ENCODE measurements at regions of chr12 and their contacts with region 1.

Region 1: DNA sequence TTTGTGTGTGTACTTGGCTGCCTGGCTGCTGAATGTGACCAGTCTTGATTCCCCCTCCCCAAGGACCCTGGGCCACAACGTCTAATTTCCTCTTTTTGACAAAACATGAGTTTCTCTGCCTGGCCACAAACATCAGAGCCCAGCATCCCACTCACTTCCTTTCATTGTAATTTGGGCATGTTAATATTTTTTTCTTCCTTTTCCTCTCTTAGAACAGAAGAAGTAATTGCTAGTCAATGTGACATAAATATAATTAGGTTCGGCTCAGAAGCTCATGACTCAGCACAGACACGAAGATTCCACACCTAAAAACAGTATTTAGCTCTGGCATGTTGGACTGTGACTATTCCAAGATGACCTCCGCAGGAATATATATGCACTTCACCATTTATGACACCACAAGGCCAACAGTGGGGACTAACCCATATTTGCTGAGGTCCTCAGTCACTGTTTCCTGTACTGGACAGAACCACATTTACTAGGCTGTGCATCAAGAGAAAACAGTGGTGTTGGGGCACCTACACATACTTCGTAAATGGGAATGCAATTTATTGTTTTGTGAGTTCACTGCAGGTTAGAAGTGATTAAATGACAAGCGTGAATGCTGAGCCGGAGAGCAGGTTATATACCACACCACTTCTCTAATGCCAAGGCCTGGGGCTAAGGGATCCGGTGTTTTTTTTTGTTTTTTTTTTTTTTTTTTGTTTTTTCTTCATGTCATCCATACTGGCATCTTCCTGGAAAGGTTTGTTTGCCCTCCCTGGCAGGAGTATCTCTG is 4.2 kb downstream of the GSG1 start:
- DNase-seq: no peak
- ATAC-seq: no peak
- H3K4me3 ChIP-seq: no peak overlapping the region
- H3K27ac ChIP-seq: no peak overlapping the region
- H3K4me1 ChIP-seq: peaks cover 19% of the 10 kb centered on the region; the same call in 1 of the 2 replicates
- H3K27me3 ChIP-seq: peaks cover 2 to 9% of the 10 kb centered on the region in 2 experiments; a peak in 3 of 4 replicates
- CTCF ChIP-seq: no peak
- EP300 ChIP-seq: no peak
- POLR2A ChIP-seq: no peak
- RAD21 ChIP-seq: no peak

Region 2: GRCh38 chr12:13173012-13173932 is 74.0 kb after region 1 on chr12:
- CTCF ChIA-PET with region 1: no interaction called
- POLR2A ChIA-PET with region 1: no interaction called
- RAD21 ChIA-PET with region 1: no interaction called
- SMC1A ChIA-PET with region 1: interaction called, 3 read pairs
- in situ Hi-C with region 1: no loop called
- intact Hi-C with region 1: loop called (anchors 5 kb)
- DNase-seq: peak; percentile 80
- ATAC-seq: peak; percentile 98
- H3K4me3 ChIP-seq: no peak overlapping the region
- H3K27ac ChIP-seq: peak overlapping the region; percentile 18; the same call in 1 of the 2 replicates
- H3K4me1 ChIP-seq: peaks cover 23% of the 10 kb centered on the region
- H3K27me3 ChIP-seq: peaks cover 3 to 13% of the 10 kb centered on the region in 2 experiments; a peak in 3 of 4 replicates
- CTCF ChIP-seq: no peak
- EP300 ChIP-seq: no peak
- POLR2A ChIP-seq: no peak
- RAD21 ChIP-seq: no peak

Measured in GM12878 (cell line).